GM12878 (cell line): ENCODE measurements at regions of chr17 and their contacts with region 1.

Region 1: GRCh38 chr17:41864836-41865595 is at the start of gene KLHL11:
- DNase-seq: peak; percentile 45
- ATAC-seq: peak; percentile 96
- H3K4me3 ChIP-seq: peak within 1 kb of the TSS; percentile 74
- H3K27ac ChIP-seq: peak within 1 kb of the TSS; percentile 74
- H3K4me1 ChIP-seq: peaks cover 7% of the 10 kb centered on the region; the same call in 1 of the 2 replicates
- H3K27me3 ChIP-seq: no peaks in the 10 kb centered on the region
- CTCF ChIP-seq: no peak
- EP300 ChIP-seq: no peak
- POLR2A ChIP-seq: peak; percentile 93
- RAD21 ChIP-seq: no peak
- polyA plus RNA-seq, gene KLHL11: 0.07 to 0.10 TPM

Region 2: GRCh38 chr17:41613277-41614082 is 251.5 kb before region 1 on chr17:
- CTCF ChIA-PET with region 1: no interaction called
- POLR2A ChIA-PET with region 1: no interaction called
- RAD21 ChIA-PET with region 1: no interaction called
- SMC1A ChIA-PET with region 1: no interaction called
- in situ Hi-C with region 1: no loop called
- intact Hi-C with region 1: no loop called
- DNase-seq: no peak
- ATAC-seq: no peak
- H3K4me3 ChIP-seq: no peak overlapping the region
- H3K27ac ChIP-seq: no peak overlapping the region
- H3K4me1 ChIP-seq: no peaks in the 10 kb centered on the region
- H3K27me3 ChIP-seq: peaks cover 0 to 2% of the 10 kb centered on the region in 2 experiments; a peak in 2 of 4 replicates
- CTCF ChIP-seq: no peak
- EP300 ChIP-seq: no peak
- POLR2A ChIP-seq: no peak
- RAD21 ChIP-seq: no peak

Region 3: GRCh38 chr17:41848788-41849187 is 16.2 kb before region 1 on chr17:
- CTCF ChIA-PET with region 1: interaction called, 18 read pairs
- POLR2A ChIA-PET with region 1: interaction called, 15 read pairs
- RAD21 ChIA-PET with region 1: interaction called, 15 read pairs
- SMC1A ChIA-PET with region 1: interaction called, 33 read pairs
- in situ Hi-C with region 1: no loop called
- intact Hi-C with region 1: no loop called
- DNase-seq: no peak
- ATAC-seq: no peak; the same call in 2 of the 3 replicates
- H3K4me3 ChIP-seq: no peak overlapping the region
- H3K27ac ChIP-seq: no peak overlapping the region
- H3K4me1 ChIP-seq: peaks cover 8% of the 10 kb centered on the region; the same call in 1 of the 2 replicates
- H3K27me3 ChIP-seq: no peaks in the 10 kb centered on the region
- CTCF ChIP-seq: no peak
- EP300 ChIP-seq: no peak
- POLR2A ChIP-seq: no peak
- RAD21 ChIP-seq: no peak

Region 4: DNA sequence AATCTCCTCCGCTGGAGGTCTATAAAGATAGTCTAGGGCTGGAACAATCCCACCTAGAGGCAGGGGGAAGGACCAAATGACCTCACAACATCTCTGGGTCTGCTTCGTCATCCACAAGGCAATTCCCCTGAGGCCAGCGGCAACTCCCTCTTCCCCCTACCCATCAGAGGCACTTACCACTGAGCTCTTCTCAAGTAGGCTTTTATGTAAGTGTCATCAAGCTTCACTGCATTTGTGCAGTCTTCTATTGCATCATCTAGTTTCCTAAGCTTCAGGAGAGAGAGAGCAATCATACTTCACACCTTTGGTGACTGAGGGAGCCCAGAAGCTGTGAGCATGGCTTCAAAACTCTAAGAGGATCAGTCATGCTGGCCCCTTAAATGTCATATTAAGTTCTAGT is 122.6 kb after region 1 on chr17:
- CTCF ChIA-PET with region 1: no interaction called
- POLR2A ChIA-PET with region 1: no interaction called
- RAD21 ChIA-PET with region 1: no interaction called
- SMC1A ChIA-PET with region 1: no interaction called
- in situ Hi-C with region 1: no loop called
- intact Hi-C with region 1: no loop called
- DNase-seq: no peak
- ATAC-seq: no peak
- H3K4me3 ChIP-seq: no peak overlapping the region
- H3K27ac ChIP-seq: no peak overlapping the region
- H3K4me1 ChIP-seq: no peaks in the 10 kb centered on the region
- H3K27me3 ChIP-seq: no peaks in the 10 kb centered on the region
- CTCF ChIP-seq: no peak
- EP300 ChIP-seq: no peak
- POLR2A ChIP-seq: no peak
- RAD21 ChIP-seq: no peak

Region 5: GRCh38 chr17:42163113-42163512 is 298.1 kb after region 1 on chr17:
- CTCF ChIA-PET with region 1: no interaction called
- POLR2A ChIA-PET with region 1: no interaction called
- RAD21 ChIA-PET with region 1: no interaction called
- SMC1A ChIA-PET with region 1: no interaction called
- in situ Hi-C with region 1: no loop called
- intact Hi-C with region 1: no loop called
- DNase-seq: no peak
- ATAC-seq: peak; percentile 67
- H3K4me3 ChIP-seq: no peak overlapping the region
- H3K27ac ChIP-seq: no peak overlapping the region
- H3K4me1 ChIP-seq: peaks cover 9% of the 10 kb centered on the region
- H3K27me3 ChIP-seq: no peaks in the 10 kb centered on the region
- CTCF ChIP-seq: peak; percentile 24 to 66 (median 66); a peak in 5 of 6 replicates
- EP300 ChIP-seq: no peak
- POLR2A ChIP-seq: no peak
- RAD21 ChIP-seq: no peak